IMR-90 (cell line): ENCODE measurements at regions of chr19 and their contacts with region 1.

Region 1: GRCh38 chr19:16814526-16815100 is 14.6 kb upstream of the SIN3B start:
- DNase-seq: peak; percentile 46
- ATAC-seq: no peak
- H3K4me3 ChIP-seq: no peak overlapping the region
- H3K27ac ChIP-seq: no peak overlapping the region
- H3K4me1 ChIP-seq: no peaks in the 10 kb centered on the region
- H3K27me3 ChIP-seq: peaks cover 2% of the 10 kb centered on the region; the same call in 1 of the 2 replicates
- CTCF ChIP-seq: no peak
- POLR2A ChIP-seq: no peak
- RAD21 ChIP-seq: no peak

Region 2: DNA sequence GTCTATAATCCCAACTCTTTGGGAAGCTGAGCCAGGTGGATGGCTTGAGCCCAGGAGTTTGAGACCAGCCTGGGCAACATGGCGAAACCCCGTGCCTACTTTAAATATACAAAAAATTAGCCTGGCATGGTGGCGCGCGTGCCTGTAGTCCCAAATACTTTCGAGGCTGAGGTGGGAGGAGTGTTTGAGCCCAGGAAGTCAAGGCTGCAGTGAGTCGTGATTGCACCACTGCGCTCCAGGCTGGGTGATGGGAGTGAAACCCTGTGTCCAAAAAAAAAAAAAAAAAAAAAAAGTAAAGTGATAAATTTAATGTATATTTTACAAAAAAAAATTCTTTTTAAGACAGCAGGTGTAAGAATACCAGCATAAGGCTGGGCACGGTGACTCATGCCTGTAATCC is 136.1 kb before region 1 on chr19:
- CTCF ChIA-PET with region 1: no interaction called
- POLR2A ChIA-PET with region 1: interaction called, 10 read pairs
- dilution Hi-C with region 1: no loop called
- in situ Hi-C with region 1: no loop called
- intact Hi-C with region 1: no loop called
- DNase-seq: no peak
- ATAC-seq: no peak
- H3K4me3 ChIP-seq: no peak overlapping the region
- H3K27ac ChIP-seq: no peak overlapping the region
- H3K4me1 ChIP-seq: no peaks in the 10 kb centered on the region
- H3K27me3 ChIP-seq: no peaks in the 10 kb centered on the region
- CTCF ChIP-seq: no peak
- POLR2A ChIP-seq: no peak
- RAD21 ChIP-seq: no peak

Region 3: GRCh38 chr19:17052439-17053210 is 238.0 kb after region 1 on chr19:
- CTCF ChIA-PET with region 1: no interaction called
- POLR2A ChIA-PET with region 1: no interaction called
- dilution Hi-C with region 1: no loop called
- in situ Hi-C with region 1: no loop called
- intact Hi-C with region 1: no loop called
- DNase-seq: peak; percentile 59
- ATAC-seq: peak; percentile 72
- H3K4me3 ChIP-seq: no peak overlapping the region
- H3K27ac ChIP-seq: no peak overlapping the region
- H3K4me1 ChIP-seq: peaks cover 6% of the 10 kb centered on the region
- H3K27me3 ChIP-seq: no peaks in the 10 kb centered on the region
- CTCF ChIP-seq: peak; percentile 63
- POLR2A ChIP-seq: no peak
- RAD21 ChIP-seq: peak; percentile 68

Region 4: GRCh38 chr19:17932485-17933338 is 1118.1 kb after region 1 on chr19 and contains the start of gene CCDC124:
- CTCF ChIA-PET with region 1: no interaction called
- POLR2A ChIA-PET with region 1: no interaction called
- dilution Hi-C with region 1: no loop called
- in situ Hi-C with region 1: no loop called
- intact Hi-C with region 1: no loop called
- DNase-seq: peak; percentile 89
- ATAC-seq: peak; percentile 99
- H3K4me3 ChIP-seq: peak within 1 kb of the TSS; percentile 70
- H3K27ac ChIP-seq: peak within 1 kb of the TSS; percentile 87
- H3K4me1 ChIP-seq: peaks cover 3% of the 10 kb centered on the region; the same call in 1 of the 2 replicates
- H3K27me3 ChIP-seq: peaks cover 2% of the 10 kb centered on the region; the same call in 1 of the 2 replicates
- CTCF ChIP-seq: peak; percentile 99
- POLR2A ChIP-seq: peak; percentile 35; the same call in 1 of the 2 replicates
- RAD21 ChIP-seq: peak; percentile 94
- total RNA-seq, gene CCDC124: 29.4 and 30.1 TPM in 2 replicates